Naive thymus-derived CD4-positive, alpha-beta T cell (primary cell): ENCODE measurements at regions of chr20 and their contacts with region 1.

Region 1: GRCh38 chr20:5714261-5715041 is 35.8 kb upstream of the SHLD1 start:
- DNase-seq: peak; percentile 28 to 98 (median 96)
- ATAC-seq: peak; percentile 94
- H3K4me3 ChIP-seq: peak overlapping the region; percentile 3
- H3K4me3 Mint-ChIP-seq: peak overlapping the region; percentile 52 to 81 (median 72)
- H3K27ac ChIP-seq: peak overlapping the region; percentile 87
- H3K27ac Mint-ChIP-seq: peak overlapping the region; percentile 81 to 100 (median 95)
- H3K4me1 ChIP-seq: peaks cover 21 to 28% of the 10 kb centered on the region in 2 donors
- H3K4me1 Mint-ChIP-seq: peaks cover 15 to 59% (median 51%) of the 10 kb centered on the region in 7 donors
- H3K27me3 ChIP-seq: no peaks in the 10 kb centered on the region
- H3K27me3 Mint-ChIP-seq: peaks cover 0 to 4% (median 0%) of the 10 kb centered on the region in 5 donors

Region 2: DNA sequence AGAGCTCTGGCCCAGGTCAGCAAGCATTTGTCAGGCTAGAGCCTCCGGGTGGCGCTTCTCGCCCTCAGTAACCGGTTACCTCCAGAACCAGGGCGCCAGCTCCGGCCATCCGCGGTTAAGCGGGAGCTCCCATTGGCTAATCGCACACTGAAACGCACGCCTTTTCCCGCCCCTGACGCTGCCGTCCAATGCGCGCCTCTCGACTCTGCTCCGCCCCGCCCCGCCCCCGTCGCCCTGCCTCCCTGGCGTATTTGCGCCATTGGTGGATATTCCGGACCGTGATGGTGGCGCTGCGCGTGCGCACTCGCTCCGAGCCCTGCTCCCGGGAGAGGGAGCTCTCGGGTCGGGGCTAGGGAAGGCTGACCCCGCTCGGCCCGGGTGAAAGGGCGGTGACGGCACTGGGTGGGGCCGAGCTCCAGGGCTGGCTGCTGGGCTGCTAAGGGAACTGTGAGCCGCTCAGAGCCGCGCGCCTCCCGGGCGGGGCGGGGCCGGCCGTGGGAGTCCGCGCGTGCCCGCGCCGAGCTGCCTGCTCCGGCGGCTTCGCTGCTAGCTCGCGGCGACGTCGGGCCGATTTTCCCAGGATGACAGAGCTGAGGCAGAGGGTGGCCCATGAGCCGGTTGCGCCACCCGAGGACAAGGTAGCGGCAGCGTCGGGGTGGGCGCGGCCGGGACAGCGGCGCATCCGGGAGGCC is 587.8 kb before region 1 on chr20 and contains the start of gene CDS2:
- CTCF ChIA-PET with region 1: no interaction called
- POLR2A ChIA-PET with region 1: no interaction called
- intact Hi-C with region 1: loop called in 1 of 2 experiments (anchors 10 kb)
- DNase-seq: peak; percentile 99
- ATAC-seq: peak; percentile 93
- H3K4me3 ChIP-seq: peak within 1 kb of the TSS; percentile 64
- H3K4me3 Mint-ChIP-seq: peak within 1 kb of the TSS; percentile 87 to 96 (median 93)
- H3K27ac ChIP-seq: peak within 1 kb of the TSS; percentile 99
- H3K27ac Mint-ChIP-seq: peak within 1 kb of the TSS; percentile 85 to 99 (median 94)
- H3K4me1 ChIP-seq: peaks cover 19 to 27% of the 10 kb centered on the region in 2 donors
- H3K4me1 Mint-ChIP-seq: peaks cover 15 to 58% (median 41%) of the 10 kb centered on the region in 7 donors
- H3K27me3 ChIP-seq: no peaks in the 10 kb centered on the region
- H3K27me3 Mint-ChIP-seq: no peaks in the 10 kb centered on the region
- total RNA-seq, gene CDS2: 48.3 to 58.3 (median 57.8) TPM

Region 3: DNA sequence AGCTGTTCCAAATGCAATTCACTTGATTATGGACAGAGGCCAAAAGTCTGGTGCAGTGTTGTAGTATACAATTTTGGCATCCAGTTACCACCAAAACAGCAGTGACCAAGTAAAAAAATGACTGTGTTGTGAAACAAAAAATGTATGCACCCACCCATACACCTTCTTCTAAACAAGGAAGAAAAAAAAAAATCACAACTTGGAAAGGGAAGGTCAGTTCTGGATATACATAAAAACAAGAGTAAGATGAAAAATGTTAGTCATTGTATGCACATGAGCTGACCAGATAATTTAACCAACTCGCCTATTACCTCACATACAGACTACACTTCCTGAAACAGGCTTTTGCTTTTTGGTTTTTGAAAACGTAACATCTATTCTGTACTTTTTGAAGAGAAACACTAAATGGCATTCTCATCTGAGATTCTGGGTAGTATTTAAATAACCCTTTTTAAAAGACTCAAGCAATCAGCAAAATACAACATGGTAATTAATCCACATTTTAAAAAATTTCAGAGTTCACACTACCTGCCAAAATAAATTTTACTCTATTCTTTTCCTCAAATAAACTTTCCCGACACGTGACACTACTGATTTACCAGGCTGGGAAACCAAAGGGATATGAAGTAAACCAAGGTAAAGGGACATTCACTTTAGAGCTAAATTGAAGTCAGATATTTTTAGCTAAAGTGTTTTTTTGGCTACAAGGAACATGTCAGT is 105.8 kb before region 1 on chr20:
- CTCF ChIA-PET with region 1: interaction called, 3 read pairs
- POLR2A ChIA-PET with region 1: interaction called, 14 read pairs
- intact Hi-C with region 1: loop called in 1 of 2 experiments (anchors 1 kb)
- DNase-seq: peak in 1 of 9 donors; percentile 17
- ATAC-seq: no peak
- H3K4me3 ChIP-seq: peak overlapping the region; percentile 86
- H3K4me3 Mint-ChIP-seq: peak overlapping the region; percentile 90 to 99 (median 97)
- H3K27ac ChIP-seq: peak overlapping the region; percentile 99
- H3K27ac Mint-ChIP-seq: peak overlapping the region; percentile 96 to 100 (median 99)
- H3K4me1 ChIP-seq: peaks cover 35 to 41% of the 10 kb centered on the region in 2 donors
- H3K4me1 Mint-ChIP-seq: peaks cover 32 to 66% (median 56%) of the 10 kb centered on the region in 7 donors
- H3K27me3 ChIP-seq: no peaks in the 10 kb centered on the region
- H3K27me3 Mint-ChIP-seq: no peaks in the 10 kb centered on the region

Region 4: DNA sequence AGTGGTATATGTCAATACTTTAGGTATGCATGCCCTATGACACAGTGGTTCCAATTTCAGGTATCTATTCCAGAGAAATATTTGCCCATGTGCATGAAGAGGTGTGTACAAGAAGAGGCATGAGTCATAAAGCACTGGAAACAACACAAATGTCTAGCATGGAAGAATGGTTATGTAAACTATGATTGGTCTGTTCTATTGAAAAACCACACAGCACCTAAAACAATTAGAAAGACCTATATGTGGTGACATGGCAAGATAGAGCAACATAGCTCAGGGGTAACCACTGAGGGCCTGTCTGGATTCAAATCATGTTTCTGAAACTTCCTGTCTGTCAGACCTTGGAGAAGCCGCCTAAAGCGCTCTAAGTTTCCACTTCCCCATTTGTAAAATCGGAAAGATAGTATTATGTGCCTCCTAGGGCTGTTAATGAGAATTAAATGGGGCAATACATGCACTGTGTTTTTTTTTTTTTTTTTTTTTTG is 40.2 kb before region 1 on chr20:
- CTCF ChIA-PET with region 1: no interaction called
- POLR2A ChIA-PET with region 1: interaction called, 3 read pairs
- intact Hi-C with region 1: loop called in 1 of 2 experiments (anchors 1 kb)
- DNase-seq: peak in 1 of 9 donors; percentile 5
- ATAC-seq: peak; percentile 77
- H3K4me3 ChIP-seq: no peak overlapping the region
- H3K4me3 Mint-ChIP-seq: no peak overlapping the region
- H3K27ac ChIP-seq: no peak overlapping the region
- H3K27ac Mint-ChIP-seq: peak overlapping the region in 2 of 9 donors; percentile 1 to 42
- H3K4me1 ChIP-seq: no peaks in the 10 kb centered on the region
- H3K4me1 Mint-ChIP-seq: peaks cover 0 to 9% (median 6%) of the 10 kb centered on the region in 7 donors
- H3K27me3 ChIP-seq: no peaks in the 10 kb centered on the region
- H3K27me3 Mint-ChIP-seq: no peaks in the 10 kb centered on the region

Region 5: GRCh38 chr20:5788385-5788895 is 74.0 kb after region 1 on chr20:
- CTCF ChIA-PET with region 1: interaction called, 3 read pairs
- POLR2A ChIA-PET with region 1: no interaction called
- intact Hi-C with region 1: loop called in 1 of 2 experiments (anchors 1 kb)
- DNase-seq: peak; percentile 21 to 88 (median 83)
- ATAC-seq: peak; percentile 100
- H3K4me3 ChIP-seq: no peak overlapping the region
- H3K4me3 Mint-ChIP-seq: no peak overlapping the region
- H3K27ac ChIP-seq: no peak overlapping the region
- H3K27ac Mint-ChIP-seq: peak overlapping the region in 6 of 9 donors; percentile 8 to 89 (median 68)
- H3K4me1 ChIP-seq: no peaks in the 10 kb centered on the region
- H3K4me1 Mint-ChIP-seq: peaks cover 0 to 22% (median 9%) of the 10 kb centered on the region in 7 donors
- H3K27me3 ChIP-seq: no peaks in the 10 kb centered on the region
- H3K27me3 Mint-ChIP-seq: no peaks in the 10 kb centered on the region